Activated CD8-positive, alpha-beta T cell treated with anti-CD3 and anti-CD28 coated beads for 36 hours (primary cell): ENCODE measurements at regions of chr10 and their contacts with region 1.

Region 1: GRCh38 chr10:6364893-6365292 is 162.2 kb downstream of the PFKFB3 start:
- DNase-seq: no peak
- ATAC-seq: no peak
- H3K4me3 Mint-ChIP-seq: no peak overlapping the region
- H3K27ac Mint-ChIP-seq: no peak overlapping the region
- H3K4me1 Mint-ChIP-seq: no peaks in the 10 kb centered on the region
- H3K27me3 Mint-ChIP-seq: no peaks in the 10 kb centered on the region
- CTCF ChIP-seq: no peak

Region 2: DNA sequence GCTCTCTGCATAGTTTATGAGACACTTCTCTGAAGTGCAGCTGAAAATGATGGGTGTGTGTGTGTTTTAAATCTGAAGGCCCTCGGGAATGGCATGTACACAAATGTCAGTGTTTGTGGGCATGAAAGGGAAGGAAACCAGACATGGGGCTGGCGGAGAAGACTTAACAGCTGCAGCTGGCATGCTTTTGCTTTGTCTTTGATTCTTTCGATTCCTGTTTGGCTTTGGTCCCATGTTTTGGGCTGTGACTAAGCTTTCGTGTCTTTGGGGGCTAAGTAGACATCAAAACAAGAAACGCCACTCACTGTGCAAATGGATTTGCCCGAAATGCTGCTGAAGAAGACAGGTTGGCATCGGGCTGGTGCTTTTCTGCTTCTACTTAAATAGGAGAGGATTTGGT is 17.2 kb after region 1 on chr10:
- CTCF ChIA-PET with region 1: interaction called, 12 read pairs
- POLR2A ChIA-PET with region 1: interaction called, 6 read pairs
- intact Hi-C with region 1: no loop called
- DNase-seq: peak; percentile 69
- ATAC-seq: peak; percentile 91
- H3K4me3 Mint-ChIP-seq: peak overlapping the region; percentile 54
- H3K27ac Mint-ChIP-seq: peak overlapping the region; percentile 53
- H3K4me1 Mint-ChIP-seq: peaks cover 24% of the 10 kb centered on the region
- H3K27me3 Mint-ChIP-seq: no peaks in the 10 kb centered on the region
- CTCF ChIP-seq: no peak

Region 3: GRCh38 chr10:6473901-6474370 is 109.0 kb after region 1 on chr10:
- CTCF ChIA-PET with region 1: no interaction called
- POLR2A ChIA-PET with region 1: no interaction called
- intact Hi-C with region 1: no loop called
- DNase-seq: peak; percentile 49
- ATAC-seq: peak; percentile 82
- H3K4me3 Mint-ChIP-seq: peak overlapping the region; percentile 80
- H3K27ac Mint-ChIP-seq: peak overlapping the region; percentile 96
- H3K4me1 Mint-ChIP-seq: peaks cover 67% of the 10 kb centered on the region
- H3K27me3 Mint-ChIP-seq: no peaks in the 10 kb centered on the region
- CTCF ChIP-seq: no peak